GM12878 (cell line): ENCODE measurements at regions of chr7 and their contacts with region 1.

Region 1: GRCh38 chr7:22726345-22727185 is 435 bp upstream of the IL6 start:
- DNase-seq: no peak
- ATAC-seq: peak; percentile 92
- H3K4me3 ChIP-seq: no peak overlapping the region
- H3K27ac ChIP-seq: no peak overlapping the region
- H3K4me1 ChIP-seq: peaks cover 5% of the 10 kb centered on the region; the same call in 1 of the 2 replicates
- H3K27me3 ChIP-seq: peaks cover 5 to 8% of the 10 kb centered on the region in 2 experiments
- CTCF ChIP-seq: peak; percentile 67 to 84 (median 77)
- EP300 ChIP-seq: no peak
- POLR2A ChIP-seq: no peak
- RAD21 ChIP-seq: peak; percentile 70

Region 2: GRCh38 chr7:22103255-22103969 is 623.2 kb before region 1 on chr7:
- CTCF ChIA-PET with region 1: no interaction called
- POLR2A ChIA-PET with region 1: no interaction called
- RAD21 ChIA-PET with region 1: no interaction called
- SMC1A ChIA-PET with region 1: no interaction called
- in situ Hi-C with region 1: loop called (anchors 25 kb)
- intact Hi-C with region 1: no loop called
- DNase-seq: peak; percentile 25
- ATAC-seq: peak; percentile 98
- H3K4me3 ChIP-seq: no peak overlapping the region
- H3K27ac ChIP-seq: no peak overlapping the region
- H3K4me1 ChIP-seq: no peaks in the 10 kb centered on the region
- H3K27me3 ChIP-seq: peaks cover 0 to 2% of the 10 kb centered on the region in 2 experiments; a peak in 1 of 4 replicates
- CTCF ChIP-seq: peak; percentile 70 to 73 (median 72)
- EP300 ChIP-seq: no peak
- POLR2A ChIP-seq: no peak
- RAD21 ChIP-seq: peak; percentile 78

Region 3: DNA sequence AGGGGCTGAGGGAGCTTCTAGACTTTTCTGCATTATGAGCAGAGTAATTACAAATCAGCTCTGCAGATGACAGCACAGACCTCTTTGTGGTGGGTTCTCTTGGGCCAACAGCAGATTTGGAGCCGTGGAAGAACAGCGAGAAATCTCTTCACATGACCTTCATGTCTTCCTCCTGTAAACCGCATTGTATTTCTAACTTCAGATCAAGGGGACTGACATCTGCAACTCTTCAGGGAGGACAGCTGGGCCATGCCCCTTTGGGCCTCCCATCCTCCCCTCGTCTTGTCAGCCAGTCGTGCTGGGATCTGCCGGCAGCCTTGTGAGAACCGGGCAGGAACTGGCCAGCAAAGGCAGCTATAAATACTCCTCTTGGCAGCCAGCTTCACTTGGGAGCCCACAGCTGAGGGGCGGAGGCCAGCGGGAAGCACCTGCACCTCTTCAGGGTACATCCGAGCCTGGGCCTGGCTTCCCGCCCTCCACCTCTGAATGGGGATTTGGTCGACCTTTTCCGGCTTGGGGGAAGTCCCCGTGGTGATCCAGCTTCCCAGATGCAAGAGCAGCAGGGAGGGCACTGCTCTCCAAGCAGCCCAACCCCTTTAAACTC is 281.3 kb before region 1 on chr7:
- CTCF ChIA-PET with region 1: no interaction called
- POLR2A ChIA-PET with region 1: no interaction called
- RAD21 ChIA-PET with region 1: no interaction called
- SMC1A ChIA-PET with region 1: no interaction called
- in situ Hi-C with region 1: no loop called
- intact Hi-C with region 1: no loop called
- DNase-seq: no peak
- ATAC-seq: peak; percentile 35
- H3K4me3 ChIP-seq: no peak overlapping the region
- H3K27ac ChIP-seq: peak overlapping the region; percentile 67
- H3K4me1 ChIP-seq: peaks cover 42% of the 10 kb centered on the region
- H3K27me3 ChIP-seq: no peaks in the 10 kb centered on the region
- CTCF ChIP-seq: no peak
- EP300 ChIP-seq: 0 out of 4 replicates have a peak, but pooled peaks of 1 of the 2 experiments have one; percentile 27
- POLR2A ChIP-seq: no peak
- RAD21 ChIP-seq: 0 out of 2 replicates have a peak, but pooled peaks have one; percentile 13

Region 4: GRCh38 chr7:22782616-22783232 is 56.2 kb after region 1 on chr7:
- CTCF ChIA-PET with region 1: interaction called, 11 read pairs
- POLR2A ChIA-PET with region 1: no interaction called
- RAD21 ChIA-PET with region 1: interaction called, 4 read pairs
- SMC1A ChIA-PET with region 1: interaction called, 4 read pairs
- in situ Hi-C with region 1: no loop called
- intact Hi-C with region 1: loop called (anchors 2 kb)
- DNase-seq: no peak
- ATAC-seq: peak; percentile 99
- H3K4me3 ChIP-seq: no peak overlapping the region
- H3K27ac ChIP-seq: no peak overlapping the region
- H3K4me1 ChIP-seq: no peaks in the 10 kb centered on the region
- H3K27me3 ChIP-seq: no peaks in the 10 kb centered on the region; a peak in 1 of 4 replicates
- CTCF ChIP-seq: peak; percentile 81 to 97 (median 97)
- EP300 ChIP-seq: no peak
- POLR2A ChIP-seq: no peak
- RAD21 ChIP-seq: peak; percentile 75

Region 5: GRCh38 chr7:22958742-22959141 is 232.2 kb after region 1 on chr7:
- CTCF ChIA-PET with region 1: interaction called, 3 read pairs
- POLR2A ChIA-PET with region 1: no interaction called
- RAD21 ChIA-PET with region 1: no interaction called
- SMC1A ChIA-PET with region 1: no interaction called
- in situ Hi-C with region 1: no loop called
- intact Hi-C with region 1: loop called (anchors 5 kb)
- DNase-seq: no peak
- ATAC-seq: peak; percentile 73
- H3K4me3 ChIP-seq: no peak overlapping the region
- H3K27ac ChIP-seq: no peak overlapping the region
- H3K4me1 ChIP-seq: peaks cover 6% of the 10 kb centered on the region; the same call in 1 of the 2 replicates
- H3K27me3 ChIP-seq: no peaks in the 10 kb centered on the region
- CTCF ChIP-seq: no peak
- EP300 ChIP-seq: no peak
- POLR2A ChIP-seq: no peak
- RAD21 ChIP-seq: no peak